CD4-positive, alpha-beta memory T cell (primary cell): ENCODE measurements at regions of chr12 and their contacts with region 1.

Region 1: DNA sequence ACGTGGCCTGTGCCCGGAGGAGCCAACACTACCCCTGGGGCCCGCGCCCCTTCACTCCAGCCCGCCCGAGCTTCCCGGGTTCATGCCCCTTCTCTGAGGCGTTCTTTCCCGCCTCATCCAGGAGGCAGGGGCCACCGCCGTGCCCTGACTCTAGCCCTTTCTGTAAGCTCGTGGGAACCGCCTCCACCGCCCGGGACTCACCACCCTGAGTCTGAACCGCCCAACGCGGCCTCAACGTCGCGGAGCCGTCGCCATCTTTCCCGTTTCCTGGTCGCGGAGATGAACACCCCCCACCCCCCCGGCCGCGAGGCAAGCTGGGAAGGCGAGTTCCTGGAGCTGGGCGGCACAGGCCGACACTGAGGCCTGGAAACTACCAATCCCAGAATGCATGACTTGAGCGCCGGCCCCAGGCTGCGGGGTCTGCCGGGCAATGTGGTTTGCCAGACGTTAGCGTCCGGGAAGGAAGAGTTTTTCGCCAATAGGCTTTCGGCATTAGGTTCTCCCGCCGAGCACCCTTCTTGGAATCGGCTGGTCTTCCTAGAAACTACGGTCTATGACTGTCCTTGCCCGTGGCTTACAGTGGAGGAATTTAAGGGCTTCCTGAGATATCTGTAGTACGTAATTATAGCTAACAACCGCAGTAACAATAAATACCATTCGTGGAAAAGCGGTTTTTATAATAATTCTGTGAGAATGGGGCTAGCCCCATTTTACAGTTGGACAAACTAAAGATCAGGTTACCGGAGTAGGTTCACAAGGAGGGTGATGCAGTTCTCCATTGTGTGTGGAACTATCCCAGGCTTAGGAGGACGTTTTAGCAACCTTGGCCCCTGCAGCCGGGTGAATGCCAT is at the start of gene DDX23:
- DNase-seq: peak; percentile 89 to 96 (median 92)
- H3K4me3 ChIP-seq: peak within 1 kb of the TSS; percentile 39 to 95
- H3K4me3 Mint-ChIP-seq: peak within 1 kb of the TSS; percentile 91 to 100 (median 98)
- H3K27ac ChIP-seq: peak within 1 kb of the TSS; percentile 91
- H3K27ac Mint-ChIP-seq: peak within 1 kb of the TSS; percentile 92 to 99 (median 99)
- H3K4me1 ChIP-seq: peaks cover 32% of the 10 kb centered on the region
- H3K4me1 Mint-ChIP-seq: peaks cover 28 to 49% (median 40%) of the 10 kb centered on the region in 4 donors
- H3K27me3 ChIP-seq: no peaks in the 10 kb centered on the region
- H3K27me3 Mint-ChIP-seq: no peaks in the 10 kb centered on the region
- total RNA-seq, gene DDX23: 154 to 158 TPM

Region 2: DNA sequence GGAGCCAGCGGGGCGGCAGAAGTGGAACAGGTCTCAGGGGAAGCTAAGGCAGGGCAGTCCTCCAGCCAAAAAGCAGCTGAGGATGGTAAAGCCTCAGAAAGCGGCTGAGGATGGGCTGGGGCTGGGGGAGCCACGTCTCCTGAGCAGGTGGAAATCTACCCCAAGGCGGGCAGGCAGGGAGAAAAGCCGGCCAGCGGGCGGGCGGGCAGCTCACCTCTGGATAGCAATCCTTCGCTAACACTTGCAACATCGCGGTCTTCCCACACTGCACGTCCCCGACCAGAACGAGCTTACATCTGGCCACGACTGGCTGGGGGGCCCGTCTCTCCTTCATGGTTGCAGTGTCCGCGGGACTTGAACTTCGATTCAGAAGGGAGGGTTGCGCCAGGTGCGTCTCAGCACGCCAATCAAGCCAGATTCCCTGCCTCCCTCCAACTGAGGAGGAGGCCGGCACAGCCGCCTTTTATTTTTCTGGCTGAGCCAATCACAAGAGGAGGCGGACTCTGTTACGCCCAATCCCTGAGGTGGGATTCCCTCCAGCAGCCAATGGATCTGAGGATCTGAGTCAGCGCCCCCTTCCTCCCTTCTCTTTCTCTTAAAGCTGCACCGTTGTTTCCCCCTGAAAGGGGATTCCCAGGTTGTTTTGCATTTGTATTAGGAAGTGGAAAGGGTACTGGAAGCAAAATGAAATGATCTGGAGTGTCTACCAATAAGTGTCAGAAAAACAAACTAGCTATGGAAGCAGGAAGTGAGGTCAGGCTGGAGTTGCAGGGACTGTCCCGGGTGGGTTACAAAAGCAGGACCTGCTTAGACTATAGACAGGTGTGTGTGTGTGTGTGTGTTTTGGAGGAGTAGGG is 13.6 kb after region 1 on chr12 and contains the start of gene RND1:
- CTCF ChIA-PET with region 1: interaction called, 57 read pairs
- POLR2A ChIA-PET with region 1: interaction called, 82 read pairs
- intact Hi-C with region 1: loop called (anchors 1 kb)
- DNase-seq: peak; percentile 85 to 95 (median 87)
- H3K4me3 ChIP-seq: peak within 1 kb of the TSS; percentile 49 to 62
- H3K4me3 Mint-ChIP-seq: peak within 1 kb of the TSS; percentile 90 to 95 (median 92)
- H3K27ac ChIP-seq: peak within 1 kb of the TSS; percentile 62
- H3K27ac Mint-ChIP-seq: peak within 1 kb of the TSS; percentile 80 to 95 (median 88)
- H3K4me1 ChIP-seq: peaks cover 21% of the 10 kb centered on the region
- H3K4me1 Mint-ChIP-seq: peaks cover 17 to 30% (median 23%) of the 10 kb centered on the region in 4 donors
- H3K27me3 ChIP-seq: peaks cover 11% of the 10 kb centered on the region
- H3K27me3 Mint-ChIP-seq: peaks cover 11 to 16% of the 10 kb centered on the region in 2 donors
- total RNA-seq, gene RND1: 0.89 to 1.4 TPM

Region 3: GRCh38 chr12:48910196-48910595 is 58.1 kb after region 1 on chr12:
- CTCF ChIA-PET with region 1: interaction called, 69 read pairs
- POLR2A ChIA-PET with region 1: interaction called, 3 read pairs
- intact Hi-C with region 1: no loop called
- DNase-seq: no peak
- H3K4me3 ChIP-seq: no peak overlapping the region
- H3K4me3 Mint-ChIP-seq: no peak overlapping the region
- H3K27ac ChIP-seq: no peak overlapping the region
- H3K27ac Mint-ChIP-seq: no peak overlapping the region
- H3K4me1 ChIP-seq: no peaks in the 10 kb centered on the region
- H3K4me1 Mint-ChIP-seq: no peaks in the 10 kb centered on the region
- H3K27me3 ChIP-seq: no peaks in the 10 kb centered on the region
- H3K27me3 Mint-ChIP-seq: peaks cover 0 to 4% of the 10 kb centered on the region in 2 donors

Region 4: GRCh38 chr12:48936379-48936979 is 84.4 kb after region 1 on chr12:
- CTCF ChIA-PET with region 1: interaction called, 154 read pairs
- POLR2A ChIA-PET with region 1: interaction called, 50 read pairs
- intact Hi-C with region 1: loop called (anchors 1 kb)
- DNase-seq: peak; percentile 74 to 82 (median 78)
- H3K4me3 ChIP-seq: no peak overlapping the region
- H3K4me3 Mint-ChIP-seq: no peak overlapping the region
- H3K27ac ChIP-seq: peak overlapping the region; percentile 71
- H3K27ac Mint-ChIP-seq: peak overlapping the region; percentile 86 to 97 (median 95)
- H3K4me1 ChIP-seq: peaks cover 45% of the 10 kb centered on the region
- H3K4me1 Mint-ChIP-seq: peaks cover 31 to 50% (median 38%) of the 10 kb centered on the region in 4 donors
- H3K27me3 ChIP-seq: no peaks in the 10 kb centered on the region
- H3K27me3 Mint-ChIP-seq: no peaks in the 10 kb centered on the region

Region 5: DNA sequence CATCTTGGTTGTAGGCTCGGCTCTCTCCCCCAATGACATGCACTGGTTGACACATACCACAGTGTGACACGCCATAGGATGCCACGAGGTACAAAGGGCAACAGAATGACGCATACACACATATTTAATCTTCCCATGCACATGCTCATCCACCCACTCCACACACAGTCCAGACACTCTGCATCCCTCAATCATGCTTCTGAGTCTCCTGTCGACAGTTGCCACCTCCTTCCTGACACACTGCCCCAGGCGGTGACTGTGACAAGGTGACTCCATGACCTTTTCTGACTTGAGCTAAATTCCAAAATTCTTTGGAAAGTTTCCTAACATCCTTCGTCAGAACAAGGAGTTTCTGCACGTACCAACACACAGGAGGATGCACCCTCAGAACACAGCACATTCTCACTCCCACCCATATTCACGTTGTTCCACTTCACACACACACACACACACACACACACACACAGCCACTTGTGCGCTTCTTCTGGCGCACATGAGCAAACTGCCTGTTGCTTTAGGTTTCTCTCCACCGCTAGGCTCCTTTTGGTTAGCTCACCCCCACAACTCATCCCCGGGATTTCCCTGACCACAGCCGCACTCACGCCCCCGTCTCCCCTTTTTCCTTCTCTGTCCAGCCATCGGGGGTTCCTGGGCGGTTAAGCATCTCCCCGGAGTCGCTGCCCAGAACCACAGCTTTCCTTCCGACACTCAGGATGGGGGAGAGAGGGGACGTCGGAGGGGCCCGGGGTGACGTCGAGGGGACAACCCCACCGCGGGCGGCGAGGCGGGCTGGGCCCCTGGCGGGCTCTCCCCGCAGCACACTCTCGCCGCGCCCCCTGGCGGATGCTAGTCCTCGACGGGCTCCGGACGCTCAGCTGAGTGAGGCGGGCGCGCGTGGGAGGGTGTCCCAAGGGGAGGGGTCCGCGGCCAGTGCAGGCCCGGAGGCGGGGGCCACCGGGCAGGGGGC is 125.5 kb after region 1 on chr12:
- CTCF ChIA-PET with region 1: interaction called, 43 read pairs
- POLR2A ChIA-PET with region 1: interaction called, 54 read pairs
- intact Hi-C with region 1: no loop called
- DNase-seq: peak; percentile 75 to 93 (median 80)
- H3K4me3 ChIP-seq: no peak overlapping the region
- H3K4me3 Mint-ChIP-seq: peak overlapping the region; percentile 48 to 80 (median 60)
- H3K27ac ChIP-seq: no peak overlapping the region
- H3K27ac Mint-ChIP-seq: peak overlapping the region; percentile 57 to 97 (median 83)
- H3K4me1 ChIP-seq: peaks cover 50% of the 10 kb centered on the region
- H3K4me1 Mint-ChIP-seq: peaks cover 35 to 65% (median 46%) of the 10 kb centered on the region in 4 donors
- H3K27me3 ChIP-seq: peaks cover 17% of the 10 kb centered on the region
- H3K27me3 Mint-ChIP-seq: peaks cover 11 to 26% of the 10 kb centered on the region in 2 donors

Region 6: DNA sequence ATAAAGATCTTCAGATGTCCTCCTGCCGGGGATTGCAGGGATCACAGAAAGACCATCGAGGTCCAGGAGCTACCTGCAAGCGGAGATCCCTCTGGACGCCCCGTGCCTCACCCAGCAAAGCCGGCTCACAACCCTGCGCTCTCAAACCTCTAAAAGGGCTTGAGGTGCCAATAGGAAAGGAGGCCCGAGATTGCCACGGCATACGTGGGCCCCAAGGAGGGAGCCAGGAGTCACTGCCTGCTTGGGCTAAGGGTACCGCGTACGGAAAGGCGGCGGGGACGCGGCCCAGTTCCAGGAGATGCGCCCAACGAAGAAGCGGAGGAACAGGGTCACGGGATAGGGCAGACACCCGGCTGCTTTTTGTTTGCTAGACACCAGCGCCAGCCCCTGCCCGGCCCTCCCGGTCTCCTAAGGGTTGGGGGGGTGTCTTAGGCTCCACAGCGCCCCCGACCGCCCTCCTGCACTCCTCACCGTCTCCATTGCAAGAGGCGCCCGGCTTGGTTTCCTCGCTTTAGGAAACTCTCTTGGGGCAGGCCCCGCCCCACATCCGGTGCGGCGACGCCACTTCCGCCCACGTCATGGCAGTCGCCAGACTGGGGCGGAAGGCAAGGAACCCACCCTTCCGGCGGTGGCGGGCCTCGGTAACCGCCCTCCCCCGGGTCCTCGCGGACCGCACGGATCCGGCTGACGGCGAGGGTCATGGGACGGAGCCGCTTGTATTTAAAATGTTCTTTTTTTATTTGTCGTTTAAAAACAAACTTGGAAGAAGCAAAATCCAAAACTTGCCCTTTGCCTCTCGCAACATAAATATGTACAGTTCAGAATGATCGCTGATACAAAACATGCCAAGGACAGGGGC is 166.4 kb after region 1 on chr12 and contains the start of gene PRKAG1:
- CTCF ChIA-PET with region 1: interaction called, 5 read pairs
- POLR2A ChIA-PET with region 1: interaction called, 4 read pairs
- intact Hi-C with region 1: loop called (anchors 1 kb)
- DNase-seq: peak; percentile 97 to 98 (median 98)
- H3K4me3 ChIP-seq: peak within 1 kb of the TSS; percentile 94 to 96
- H3K4me3 Mint-ChIP-seq: peak within 1 kb of the TSS; percentile 87 to 99 (median 94)
- H3K27ac ChIP-seq: peak within 1 kb of the TSS; percentile 95
- H3K27ac Mint-ChIP-seq: peak within 1 kb of the TSS; percentile 95 to 100 (median 99)
- H3K4me1 ChIP-seq: peaks cover 24% of the 10 kb centered on the region
- H3K4me1 Mint-ChIP-seq: peaks cover 18 to 51% (median 37%) of the 10 kb centered on the region in 4 donors
- H3K27me3 ChIP-seq: no peaks in the 10 kb centered on the region
- H3K27me3 Mint-ChIP-seq: no peaks in the 10 kb centered on the region
- total RNA-seq, gene PRKAG1: 48.9 to 53.7 TPM